Natural killer cell (primary cell): ENCODE measurements at regions of chr6 and their contacts with region 1.

Region 1: DNA sequence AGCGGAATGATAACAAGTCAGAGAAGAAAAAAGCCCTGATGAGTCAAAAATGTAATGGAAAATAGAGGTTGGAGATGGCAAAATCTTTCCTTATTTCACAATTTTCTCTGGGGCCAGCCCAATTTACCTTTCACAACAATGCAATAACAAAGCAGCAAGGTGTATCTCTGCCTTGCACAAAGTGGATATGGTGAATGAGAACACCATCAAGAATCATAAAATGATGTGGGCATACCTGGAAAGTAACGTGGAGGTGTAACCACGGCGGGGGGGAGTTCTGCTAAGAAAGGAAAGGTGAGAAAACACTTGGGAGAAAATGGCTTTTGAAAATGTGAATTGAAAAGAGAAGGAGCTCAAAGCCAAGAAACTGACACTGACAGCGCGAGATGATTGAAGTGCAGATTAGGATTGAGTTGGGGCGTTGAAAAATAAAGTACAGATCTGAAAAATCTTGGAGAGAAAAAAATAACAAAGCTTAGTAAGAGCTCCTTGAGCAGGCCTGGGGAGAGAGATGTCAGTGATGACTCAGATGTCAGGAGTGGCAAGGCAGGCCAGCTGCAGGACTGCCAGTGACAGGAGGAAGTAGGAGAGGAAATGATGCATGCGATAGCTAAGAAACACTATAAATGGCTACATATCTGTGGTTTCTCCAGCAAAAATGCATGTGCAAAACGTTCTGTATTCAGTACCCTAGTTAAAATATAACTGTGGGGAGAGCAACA is 26.2 kb downstream of the ARHGAP18 start:
- DNase-seq: peak; percentile 44 to 83
- ATAC-seq: peak; percentile 83 to 94 (median 84)
- H3K4me3 ChIP-seq: no peak overlapping the region
- H3K4me3 Mint-ChIP-seq: peak overlapping the region; percentile 77
- H3K27ac ChIP-seq: peak overlapping the region; percentile 69
- H3K27ac Mint-ChIP-seq: peak overlapping the region; percentile 82 to 84
- H3K4me1 ChIP-seq: peaks cover 46% of the 10 kb centered on the region
- H3K4me1 Mint-ChIP-seq: peaks cover 55 to 66% of the 10 kb centered on the region in 2 donors
- H3K27me3 ChIP-seq: no peaks in the 10 kb centered on the region
- H3K27me3 Mint-ChIP-seq: no peaks in the 10 kb centered on the region
- CTCF ChIP-seq: no peak

Region 2: GRCh38 chr6:129672881-129673643 is 10.7 kb before region 1 on chr6:
- intact Hi-C with region 1: loop called (anchors 1 kb)
- DNase-seq: peak in 1 of 2 donors; percentile 57
- ATAC-seq: peak; percentile 42 to 61 (median 44)
- H3K4me3 ChIP-seq: no peak overlapping the region
- H3K4me3 Mint-ChIP-seq: peak overlapping the region; percentile 69
- H3K27ac ChIP-seq: peak overlapping the region; percentile 62
- H3K27ac Mint-ChIP-seq: peak overlapping the region; percentile 83 to 88
- H3K4me1 ChIP-seq: peaks cover 6% of the 10 kb centered on the region
- H3K4me1 Mint-ChIP-seq: peaks cover 27 to 30% of the 10 kb centered on the region in 2 donors
- H3K27me3 ChIP-seq: no peaks in the 10 kb centered on the region
- H3K27me3 Mint-ChIP-seq: no peaks in the 10 kb centered on the region
- CTCF ChIP-seq: no peak

Region 3: GRCh38 chr6:129709769-129710449 is 26.1 kb after region 1 on chr6 and contains the start of gene ARHGAP18:
- intact Hi-C with region 1: loop called (anchors 2 kb)
- DNase-seq: peak; percentile 65 to 80
- ATAC-seq: peak; percentile 95 to 97 (median 95)
- H3K4me3 ChIP-seq: peak within 1 kb of the TSS; percentile 61
- H3K4me3 Mint-ChIP-seq: peak within 1 kb of the TSS; percentile 99
- H3K27ac ChIP-seq: peak within 1 kb of the TSS; percentile 48
- H3K27ac Mint-ChIP-seq: peak within 1 kb of the TSS; percentile 91 to 95
- H3K4me1 ChIP-seq: peaks cover 17% of the 10 kb centered on the region
- H3K4me1 Mint-ChIP-seq: peaks cover 46 to 48% of the 10 kb centered on the region in 2 donors
- H3K27me3 ChIP-seq: no peaks in the 10 kb centered on the region
- H3K27me3 Mint-ChIP-seq: peaks cover 0 to 3% of the 10 kb centered on the region in 2 donors
- CTCF ChIP-seq: no peak
- total RNA-seq, gene ARHGAP18: 11.5 to 12.5 (median 11.8) TPM